Heart right ventricle (tissue), 16 donors: ENCODE measurements at regions of chr11 and their contacts with region 1.

Region 1: DNA sequence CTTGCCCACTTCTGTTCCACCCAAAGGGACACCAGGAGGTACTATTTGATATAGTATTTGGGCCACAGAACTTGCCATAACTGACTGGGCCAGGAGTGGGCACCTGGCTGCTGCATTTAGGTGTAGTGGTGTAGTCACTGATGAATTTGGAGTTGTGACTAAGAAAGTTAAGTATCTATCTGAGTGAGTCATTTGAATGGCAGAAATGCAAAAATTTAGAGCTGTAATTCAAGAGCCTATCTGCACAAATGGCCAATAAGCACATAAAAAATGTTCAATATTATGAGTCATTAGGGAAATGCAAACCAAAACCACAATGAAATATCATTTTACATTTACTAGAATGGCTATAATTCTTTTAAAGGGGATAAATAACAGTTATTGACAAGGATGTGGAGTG is 14.7 kb downstream of the GLYATL2 start:
- DNase-seq: no peak
- ATAC-seq: no peak
- H3K4me3 ChIP-seq: no peak overlapping the region
- H3K27ac ChIP-seq: no peak overlapping the region
- H3K4me1 ChIP-seq: no peaks in the 10 kb centered on the region
- H3K27me3 ChIP-seq: peaks cover 0 to 31% (median 5%) of the 10 kb centered on the region in 7 donors
- CTCF ChIP-seq: no peak

Region 2: DNA sequence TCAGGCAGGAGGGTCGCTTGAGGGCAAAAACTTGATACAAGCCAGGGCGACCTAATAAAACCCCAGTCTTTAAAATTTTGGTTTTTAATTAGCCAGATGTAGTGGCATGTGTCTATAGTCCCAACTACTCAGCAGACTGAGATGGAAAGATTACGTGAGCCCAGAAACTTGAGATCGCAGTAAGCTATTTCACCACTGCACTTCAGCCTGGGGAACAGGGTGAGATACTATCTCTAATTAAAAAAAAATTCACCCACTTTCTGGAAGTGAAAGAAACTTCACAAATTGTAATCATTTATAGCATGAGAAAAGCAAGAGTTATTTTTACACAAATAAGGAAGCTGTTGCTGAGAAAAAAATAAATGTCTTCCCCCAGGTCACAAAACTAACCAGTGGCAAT is 15.6 kb after region 1 on chr11:
- intact Hi-C with region 1: loop called in 1 of 10 experiments (anchors 1 kb)
- DNase-seq: no peak
- ATAC-seq: no peak
- H3K4me3 ChIP-seq: no peak overlapping the region
- H3K27ac ChIP-seq: no peak overlapping the region
- H3K4me1 ChIP-seq: no peaks in the 10 kb centered on the region
- H3K27me3 ChIP-seq: no peaks in the 10 kb centered on the region
- CTCF ChIP-seq: no peak